Astrocyte of the cerebellum (primary cell): ENCODE measurements at regions of chr1 and their contacts with region 1.

Region 1: GRCh38 chr1:236858165-236858564 is 63.1 kb downstream of the MTR start:
- DNase-seq: no peak
- H3K4me3 ChIP-seq: no peak overlapping the region
- CTCF ChIP-seq: no peak

Region 2: DNA sequence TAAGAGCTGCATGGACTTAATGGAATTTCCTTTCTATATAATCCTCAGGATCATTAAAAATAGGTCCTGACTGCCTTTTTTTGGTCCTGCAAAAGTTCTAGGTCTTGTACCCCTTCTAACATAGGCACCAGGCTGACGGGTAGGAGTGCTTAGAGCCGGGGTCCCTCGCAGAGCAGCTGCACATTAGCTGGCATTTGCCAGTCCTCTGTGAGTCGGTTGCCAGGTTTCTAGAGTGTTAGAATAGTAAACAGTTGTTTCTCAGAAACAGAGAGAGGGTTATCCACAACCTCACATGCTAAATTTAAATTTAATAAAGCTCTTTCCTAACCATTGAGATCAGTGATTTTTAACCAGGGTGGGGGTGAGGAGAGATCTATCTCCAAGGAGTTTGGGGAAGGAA is 218.5 kb before region 1 on chr1:
- in situ Hi-C with region 1: no loop called
- DNase-seq: no peak
- H3K4me3 ChIP-seq: no peak overlapping the region
- CTCF ChIP-seq: no peak

Region 3: GRCh38 chr1:236810018-236810417 is 48.1 kb before region 1 on chr1:
- in situ Hi-C with region 1: loop called (anchors 5 kb)
- DNase-seq: no peak
- H3K4me3 ChIP-seq: no peak overlapping the region
- CTCF ChIP-seq: no peak